Dendritic cell treated with granulocyte-macrophage colony-stimulating factor and Interleukin-4, amounts not matched to agents 40 ng/mL and 50 ng/mL, for 4 days (primary cell): ENCODE measurements at regions of chr5 and their contacts with region 1.

Region 1: DNA sequence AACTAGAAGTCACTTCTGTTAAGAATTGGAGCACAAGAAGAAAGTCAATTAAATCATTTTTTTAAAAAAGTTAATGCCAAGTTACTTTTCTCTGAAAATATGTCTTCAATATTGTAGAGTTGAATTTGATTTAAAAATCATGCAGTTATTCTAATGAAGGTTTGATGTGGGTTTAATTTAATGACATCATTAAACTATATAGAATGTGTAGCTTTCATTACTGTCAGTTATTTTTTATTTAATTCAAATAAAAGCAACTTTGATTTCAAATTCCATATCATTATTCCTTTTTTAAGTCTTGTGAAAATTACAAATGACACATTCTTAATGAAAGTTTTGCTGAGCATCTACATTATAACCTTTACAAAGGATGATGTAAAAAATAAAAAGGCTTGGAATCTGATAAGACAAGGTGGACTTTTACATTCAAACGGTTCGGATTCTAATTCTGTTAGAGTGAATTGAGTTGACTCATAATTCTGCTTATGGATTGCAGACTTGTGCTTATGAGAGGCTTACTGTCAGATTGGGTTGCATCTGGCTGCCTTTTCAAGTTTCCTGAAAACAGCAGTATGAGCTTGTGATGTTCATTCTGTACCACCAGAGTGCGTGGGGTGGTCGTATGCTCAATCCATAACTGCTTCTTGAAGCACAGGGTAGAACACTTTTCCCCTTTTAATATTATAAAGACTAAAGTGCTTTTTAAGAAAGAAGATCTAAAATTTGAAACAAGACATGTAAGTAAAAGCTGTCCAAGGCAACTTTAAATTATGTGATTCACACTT is 253.0 kb upstream of the ARRDC3 start:
- H3K4me3 Mint-ChIP-seq: no peak overlapping the region
- H3K27ac Mint-ChIP-seq: no peak overlapping the region
- H3K4me1 Mint-ChIP-seq: no peaks in the 10 kb centered on the region
- H3K27me3 Mint-ChIP-seq: no peaks in the 10 kb centered on the region

Region 2: GRCh38 chr5:91499943-91500531 is 136.1 kb before region 1 on chr5:
- intact Hi-C with region 1: loop called (anchors 10 kb)
- H3K4me3 Mint-ChIP-seq: no peak overlapping the region
- H3K27ac Mint-ChIP-seq: no peak overlapping the region
- H3K4me1 Mint-ChIP-seq: no peaks in the 10 kb centered on the region
- H3K27me3 Mint-ChIP-seq: peaks cover 1% of the 10 kb centered on the region

Region 3: GRCh38 chr5:91656891-91657290 is 20.7 kb after region 1 on chr5:
- intact Hi-C with region 1: no loop called
- H3K4me3 Mint-ChIP-seq: no peak overlapping the region
- H3K27ac Mint-ChIP-seq: no peak overlapping the region
- H3K4me1 Mint-ChIP-seq: no peaks in the 10 kb centered on the region
- H3K27me3 Mint-ChIP-seq: no peaks in the 10 kb centered on the region